ENCODE measurements at regions of chr3 and their contacts with region 1.

Region 1: GRCh38 chr3:59192473-59192872 is 142.6 kb upstream of the CFAP20DC start:
- DNase-seq: no peak
- H3K4me3 ChIP-seq: no peak overlapping the region
- H3K27ac ChIP-seq: no peak overlapping the region
- H3K4me1 ChIP-seq: peaks cover 12% of the 10 kb centered on the region
- H3K27me3 ChIP-seq: no peaks in the 10 kb centered on the region
- CTCF ChIP-seq: no peak

Region 2: GRCh38 chr3:59374818-59375211 is 182.3 kb after region 1 on chr3:
- CTCF ChIA-PET with region 1: no interaction called
- POLR2A ChIA-PET with region 1: interaction called, 10 read pairs
- intact Hi-C with region 1: no loop called
- DNase-seq: no peak
- H3K4me3 ChIP-seq: no peak overlapping the region
- H3K27ac ChIP-seq: no peak overlapping the region
- H3K4me1 ChIP-seq: no peaks in the 10 kb centered on the region
- H3K27me3 ChIP-seq: no peaks in the 10 kb centered on the region
- CTCF ChIP-seq: no peak

Region 3: GRCh38 chr3:59424268-59425010 is 232.0 kb after region 1 on chr3:
- CTCF ChIA-PET with region 1: no interaction called
- POLR2A ChIA-PET with region 1: no interaction called
- intact Hi-C with region 1: no loop called
- DNase-seq: no peak
- H3K4me3 ChIP-seq: no peak overlapping the region
- H3K27ac ChIP-seq: no peak overlapping the region
- H3K4me1 ChIP-seq: no peaks in the 10 kb centered on the region
- H3K27me3 ChIP-seq: no peaks in the 10 kb centered on the region
- CTCF ChIP-seq: no peak